ENCODE measurements at regions of chr12 and their contacts with region 1.

Region 1: DNA sequence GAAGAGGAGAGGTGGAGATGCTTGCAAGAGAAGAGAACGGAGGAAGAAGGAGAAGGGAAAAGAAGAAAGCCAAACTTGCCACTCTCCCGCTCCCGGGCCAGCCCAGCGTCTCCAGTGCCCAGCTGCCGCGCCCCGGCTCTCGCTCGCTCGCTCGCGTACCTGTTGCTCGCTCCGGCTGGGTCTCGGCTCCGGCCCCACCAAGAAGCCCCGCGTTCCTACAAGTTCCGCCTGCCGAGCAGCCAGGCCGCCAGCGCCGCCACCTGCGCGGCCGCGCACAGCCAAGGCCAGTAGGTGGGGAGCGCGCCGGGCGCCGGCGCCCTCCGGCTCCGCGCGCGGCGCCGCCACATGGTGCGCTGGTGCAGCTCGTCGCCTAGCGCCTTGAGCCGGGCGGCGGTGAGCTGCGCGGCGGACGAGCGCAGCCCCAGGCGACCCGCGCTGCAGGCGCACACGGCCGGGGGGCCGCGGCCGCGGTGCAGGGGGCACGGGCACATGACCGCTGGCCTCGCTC is 370 bp downstream of the HRK start:
- DNase-seq: peak; percentile 79
- ATAC-seq: peak; percentile 80
- H3K4me3 ChIP-seq: peak overlapping the region; percentile 42 to 81 (median 58)
- H3K4me3 Mint-ChIP-seq: peak overlapping the region; percentile 93
- H3K27ac ChIP-seq: no peak overlapping the region
- H3K27ac Mint-ChIP-seq: peak overlapping the region; percentile 80
- H3K4me1 ChIP-seq: peaks cover 44 to 46% of the 10 kb centered on the region in 2 donors
- H3K4me1 Mint-ChIP-seq: peaks cover 51% of the 10 kb centered on the region
- H3K27me3 ChIP-seq: peaks cover 0 to 48% (median 19%) of the 10 kb centered on the region in 4 experiments
- H3K27me3 Mint-ChIP-seq: peaks cover 30% of the 10 kb centered on the region
- CTCF ChIP-seq: peak; percentile 9

Region 2: DNA sequence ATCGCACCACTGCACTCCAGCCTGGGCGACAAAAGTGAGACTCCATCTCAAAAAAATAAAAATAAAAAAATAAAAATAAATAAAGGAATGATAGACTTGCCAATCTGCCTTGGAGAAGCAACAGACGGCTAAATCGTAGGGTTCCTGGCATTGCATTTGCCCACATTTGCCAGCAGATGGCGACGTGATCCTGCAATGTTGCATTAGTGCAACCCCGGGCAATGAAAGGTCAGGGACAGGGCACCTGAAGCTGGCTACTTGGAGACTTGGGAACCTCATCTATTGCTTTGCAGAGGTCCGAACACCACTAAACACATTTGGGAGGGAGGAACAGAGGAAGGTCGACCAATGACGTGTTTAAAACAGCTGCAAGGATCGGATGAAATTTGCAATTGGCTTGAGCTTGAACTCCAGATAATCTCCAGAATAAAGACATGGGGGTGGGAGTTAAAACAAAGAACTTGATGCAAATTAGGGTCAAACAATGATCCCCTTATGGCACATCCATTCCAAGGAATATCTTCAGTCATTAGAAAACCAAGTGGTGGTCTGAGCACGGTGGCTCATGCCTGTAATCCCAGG is 177.6 kb before region 1 on chr12:
- CTCF ChIA-PET with region 1: interaction called, 69 read pairs
- POLR2A ChIA-PET with region 1: interaction called, 8 read pairs
- intact Hi-C with region 1: loop called (anchors 1 kb)
- DNase-seq: peak; percentile 74
- ATAC-seq: peak; percentile 81
- H3K4me3 ChIP-seq: no peak overlapping the region
- H3K4me3 Mint-ChIP-seq: no peak overlapping the region
- H3K27ac ChIP-seq: no peak overlapping the region
- H3K27ac Mint-ChIP-seq: no peak overlapping the region
- H3K4me1 ChIP-seq: peaks cover 9 to 11% of the 10 kb centered on the region in 2 donors
- H3K4me1 Mint-ChIP-seq: peaks cover 12% of the 10 kb centered on the region
- H3K27me3 ChIP-seq: peaks cover 0 to 3% (median 0%) of the 10 kb centered on the region in 4 experiments
- H3K27me3 Mint-ChIP-seq: peaks cover 8% of the 10 kb centered on the region
- CTCF ChIP-seq: peak; percentile 98

Region 3: DNA sequence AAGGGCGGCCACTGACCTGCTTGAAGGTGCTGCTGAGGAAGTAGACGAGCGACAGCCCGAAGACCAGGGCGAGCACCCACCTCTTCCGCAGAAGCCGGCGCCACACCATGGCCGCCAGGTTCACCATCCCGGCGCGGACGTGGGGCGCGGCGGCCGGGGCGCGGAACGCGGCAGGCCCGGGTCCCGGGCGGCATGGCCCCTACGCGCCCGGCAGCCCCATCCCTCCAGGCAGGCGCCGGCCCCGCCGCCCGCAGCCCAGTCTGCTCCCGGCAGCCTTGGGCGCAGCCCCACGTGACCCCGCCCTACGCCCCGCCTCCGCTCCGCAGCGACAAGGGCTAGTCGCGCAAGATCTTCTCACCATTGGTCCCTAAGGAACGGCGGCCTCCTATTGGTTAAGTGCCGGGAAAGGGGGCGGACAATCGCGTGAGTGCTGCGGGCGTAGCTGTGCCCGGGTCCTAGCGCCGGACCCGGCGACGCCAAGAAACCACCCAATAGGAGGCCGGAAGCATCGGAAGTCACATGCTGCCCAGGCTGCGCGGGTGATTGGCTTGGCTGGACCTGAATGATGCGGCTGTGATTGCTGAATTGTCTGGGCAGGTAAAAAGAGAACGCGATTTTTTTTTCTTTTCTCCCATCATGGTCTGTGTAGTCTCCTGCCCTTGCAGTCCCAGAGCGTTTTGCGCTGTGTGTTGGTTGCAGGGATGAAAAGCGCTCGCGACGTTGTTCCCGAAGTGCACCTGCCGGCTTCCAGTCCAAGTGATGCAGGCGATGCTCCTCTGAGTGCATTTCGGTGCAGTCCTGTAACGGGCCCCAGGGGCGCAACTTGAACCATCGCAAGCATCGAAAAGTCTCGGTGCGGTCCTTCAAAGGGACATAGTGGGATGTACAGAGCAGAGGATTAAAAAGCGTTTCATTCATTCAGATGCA is 142.8 kb before region 1 on chr12 and contains the starts of genes RNFT2 and SPRING1:
- CTCF ChIA-PET with region 1: interaction called, 4 read pairs
- POLR2A ChIA-PET with region 1: interaction called, 5 read pairs
- intact Hi-C with region 1: loop called (anchors 1 kb)
- DNase-seq: peak; percentile 99
- ATAC-seq: peak; percentile 95
- H3K4me3 ChIP-seq: peak within 1 kb of the TSS; percentile 62 to 92 (median 76)
- H3K4me3 Mint-ChIP-seq: peak within 1 kb of the TSS; percentile 97
- H3K27ac ChIP-seq: peak within 1 kb of the TSS; percentile 1 to 81
- H3K27ac Mint-ChIP-seq: peak within 1 kb of the TSS; percentile 90
- H3K4me1 ChIP-seq: peaks cover 18 to 20% of the 10 kb centered on the region in 2 donors
- H3K4me1 Mint-ChIP-seq: peaks cover 33% of the 10 kb centered on the region
- H3K27me3 ChIP-seq: no peaks in the 10 kb centered on the region
- H3K27me3 Mint-ChIP-seq: no peaks in the 10 kb centered on the region
- CTCF ChIP-seq: peak; percentile 7
- total RNA-seq, gene RNFT2: 18.2 and 23.0 TPM in 2 replicates
- total RNA-seq, gene SPRING1: 43.7 and 45.9 TPM in 2 replicates

Region 4: GRCh38 chr12:116759783-116760621 is 120.9 kb before region 1 on chr12:
- CTCF ChIA-PET with region 1: interaction called, 7 read pairs
- POLR2A ChIA-PET with region 1: no interaction called
- intact Hi-C with region 1: loop called (anchors 5 kb)
- DNase-seq: peak; percentile 36
- ATAC-seq: peak; percentile 47
- H3K4me3 ChIP-seq: peak overlapping the region in 3 of 5 experiments; percentile 15 to 33 (median 20)
- H3K4me3 Mint-ChIP-seq: peak overlapping the region; percentile 66
- H3K27ac ChIP-seq: no peak overlapping the region
- H3K27ac Mint-ChIP-seq: peak overlapping the region; percentile 65
- H3K4me1 ChIP-seq: peaks cover 0 to 2% of the 10 kb centered on the region in 2 donors
- H3K4me1 Mint-ChIP-seq: peaks cover 4% of the 10 kb centered on the region
- H3K27me3 ChIP-seq: no peaks in the 10 kb centered on the region
- H3K27me3 Mint-ChIP-seq: no peaks in the 10 kb centered on the region
- CTCF ChIP-seq: no peak

Region 5: DNA sequence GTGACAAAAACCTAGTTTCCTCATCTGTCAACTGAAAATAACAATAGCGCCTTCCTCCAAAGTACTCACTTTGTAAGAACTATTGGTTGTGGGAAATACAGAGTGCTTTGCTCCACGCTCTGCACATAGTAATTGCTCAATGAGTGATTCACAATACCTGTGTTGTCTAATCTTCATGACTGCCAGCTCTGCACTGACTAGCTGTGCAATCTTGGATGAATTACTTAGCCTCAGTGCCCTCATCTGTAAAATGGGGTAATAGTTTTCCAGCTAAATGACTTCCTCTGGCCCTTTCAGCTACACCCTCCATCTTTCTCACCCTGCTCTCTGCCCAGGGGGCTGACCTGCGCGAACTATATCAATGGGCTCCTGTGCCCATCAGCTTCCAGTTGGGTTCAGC is 99.9 kb before region 1 on chr12:
- CTCF ChIA-PET with region 1: no interaction called
- POLR2A ChIA-PET with region 1: no interaction called
- intact Hi-C with region 1: no loop called
- DNase-seq: no peak
- ATAC-seq: no peak
- H3K4me3 ChIP-seq: no peak overlapping the region
- H3K4me3 Mint-ChIP-seq: no peak overlapping the region
- H3K27ac ChIP-seq: no peak overlapping the region
- H3K27ac Mint-ChIP-seq: no peak overlapping the region
- H3K4me1 ChIP-seq: no peaks in the 10 kb centered on the region
- H3K4me1 Mint-ChIP-seq: no peaks in the 10 kb centered on the region
- H3K27me3 ChIP-seq: no peaks in the 10 kb centered on the region
- H3K27me3 Mint-ChIP-seq: no peaks in the 10 kb centered on the region
- CTCF ChIP-seq: no peak

Region 6: DNA sequence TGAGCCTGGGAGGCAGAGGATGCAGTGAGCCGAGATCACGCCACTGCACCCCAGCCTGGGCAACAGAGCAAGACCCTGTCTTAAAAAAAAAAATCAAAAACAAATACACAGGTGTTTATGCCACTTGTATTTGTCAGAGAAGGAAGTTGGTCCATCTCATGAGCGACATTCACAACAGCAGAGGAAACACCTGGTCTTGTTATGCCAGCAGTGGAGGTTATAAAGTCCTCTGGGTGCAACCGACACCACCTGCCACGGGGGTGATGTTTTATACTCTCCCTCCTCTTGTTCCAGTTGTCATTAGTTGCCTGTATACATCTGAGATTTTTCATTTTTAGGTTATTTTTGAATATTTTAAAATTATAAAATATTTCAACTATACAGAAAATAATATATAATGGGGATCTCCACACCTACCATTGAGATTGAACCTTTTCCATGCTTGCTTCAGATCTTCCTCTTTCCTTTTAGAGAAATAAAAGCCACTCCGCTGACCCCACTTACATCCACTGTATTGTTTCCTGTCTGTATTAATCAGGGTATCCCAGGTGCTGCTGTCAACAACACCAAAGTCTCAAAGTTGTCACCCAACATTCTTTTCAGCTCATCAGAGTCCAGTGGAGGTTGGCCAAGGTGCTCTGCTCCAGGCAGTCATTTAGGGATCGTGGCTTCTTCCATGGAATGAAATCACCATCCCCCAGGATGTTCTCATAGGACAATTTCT is 77.7 kb before region 1 on chr12:
- CTCF ChIA-PET with region 1: interaction called, 6 read pairs
- POLR2A ChIA-PET with region 1: interaction called, 5 read pairs
- intact Hi-C with region 1: loop called (anchors 2 kb)
- DNase-seq: peak; percentile 80
- ATAC-seq: peak; percentile 85
- H3K4me3 ChIP-seq: peak overlapping the region in 1 of 5 experiments; percentile 22
- H3K4me3 Mint-ChIP-seq: peak overlapping the region; percentile 59
- H3K27ac ChIP-seq: peak overlapping the region; percentile 92 to 93
- H3K27ac Mint-ChIP-seq: peak overlapping the region; percentile 95
- H3K4me1 ChIP-seq: peaks cover 33 to 46% of the 10 kb centered on the region in 2 donors
- H3K4me1 Mint-ChIP-seq: peaks cover 51% of the 10 kb centered on the region
- H3K27me3 ChIP-seq: no peaks in the 10 kb centered on the region
- H3K27me3 Mint-ChIP-seq: no peaks in the 10 kb centered on the region
- CTCF ChIP-seq: no peak

Region 7: DNA sequence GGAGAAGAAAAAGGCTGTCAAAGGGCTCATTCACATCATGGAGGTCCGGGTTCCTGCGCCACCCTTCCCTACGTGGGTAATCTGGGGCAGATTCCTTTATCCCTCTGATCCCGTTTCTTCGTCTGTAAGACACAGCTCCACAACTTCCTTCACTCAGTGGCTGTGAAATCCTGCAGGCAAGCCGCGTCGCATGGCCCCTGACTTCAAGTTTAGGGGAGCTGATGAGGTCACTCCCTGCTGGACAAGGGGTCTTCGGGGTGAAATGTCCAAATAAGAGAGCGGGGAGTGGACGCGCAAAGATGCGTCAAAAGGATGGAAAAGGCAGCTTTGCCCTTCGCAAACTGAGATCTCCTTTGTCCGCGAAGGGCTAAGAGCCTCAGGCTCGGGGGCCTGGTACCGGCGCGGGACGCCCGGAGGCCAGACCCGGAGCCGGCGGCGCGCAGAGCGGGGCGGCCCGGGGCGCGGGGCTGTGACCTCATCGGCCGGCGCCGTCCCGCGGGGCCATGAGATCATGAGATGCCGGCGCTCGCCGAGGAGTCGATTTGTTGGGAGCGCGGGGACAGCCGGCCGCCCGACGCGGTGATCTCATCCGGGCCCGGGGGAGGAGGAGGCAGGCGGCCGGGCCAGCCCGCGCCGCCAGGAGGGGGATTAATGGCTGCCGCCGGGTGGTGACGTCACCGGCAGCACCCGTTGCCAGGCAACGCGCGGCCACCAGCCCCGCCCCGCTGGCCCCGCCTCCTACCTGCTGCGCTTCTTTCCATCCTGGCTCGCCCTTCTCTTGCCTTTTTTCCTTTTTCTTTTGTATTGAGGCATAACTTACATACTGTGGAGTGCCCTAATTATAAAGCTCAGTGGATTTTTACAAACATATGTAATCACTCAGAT is 61.7 kb before region 1 on chr12:
- CTCF ChIA-PET with region 1: interaction called, 10 read pairs
- POLR2A ChIA-PET with region 1: interaction called, 6 read pairs
- intact Hi-C with region 1: loop called (anchors 1 kb)
- DNase-seq: peak; percentile 95
- ATAC-seq: peak; percentile 84
- H3K4me3 ChIP-seq: peak overlapping the region; percentile 82 to 96 (median 95)
- H3K4me3 Mint-ChIP-seq: peak overlapping the region; percentile 87
- H3K27ac ChIP-seq: peak overlapping the region; percentile 93 to 94
- H3K27ac Mint-ChIP-seq: peak overlapping the region; percentile 93
- H3K4me1 ChIP-seq: peaks cover 47 to 49% of the 10 kb centered on the region in 2 donors
- H3K4me1 Mint-ChIP-seq: peaks cover 59% of the 10 kb centered on the region
- H3K27me3 ChIP-seq: no peaks in the 10 kb centered on the region
- H3K27me3 Mint-ChIP-seq: no peaks in the 10 kb centered on the region
- CTCF ChIP-seq: no peak

Region 8: GRCh38 chr12:116861320-116861719 is 19.6 kb before region 1 on chr12:
- CTCF ChIA-PET with region 1: interaction called, 13 read pairs
- POLR2A ChIA-PET with region 1: interaction called, 7 read pairs
- intact Hi-C with region 1: loop called (anchors 2 kb)
- DNase-seq: peak; percentile 77
- ATAC-seq: peak; percentile 67
- H3K4me3 ChIP-seq: no peak overlapping the region
- H3K4me3 Mint-ChIP-seq: peak overlapping the region; percentile 78
- H3K27ac ChIP-seq: no peak overlapping the region
- H3K27ac Mint-ChIP-seq: peak overlapping the region; percentile 86
- H3K4me1 ChIP-seq: peaks cover 21 to 53% of the 10 kb centered on the region in 2 donors
- H3K4me1 Mint-ChIP-seq: peaks cover 65% of the 10 kb centered on the region
- H3K27me3 ChIP-seq: no peaks in the 10 kb centered on the region
- H3K27me3 Mint-ChIP-seq: no peaks in the 10 kb centered on the region
- CTCF ChIP-seq: no peak

Region 9: GRCh38 chr12:116898669-116899068 is 17.8 kb after region 1 on chr12:
- CTCF ChIA-PET with region 1: no interaction called
- POLR2A ChIA-PET with region 1: no interaction called
- intact Hi-C with region 1: no loop called
- DNase-seq: no peak
- ATAC-seq: no peak
- H3K4me3 ChIP-seq: no peak overlapping the region
- H3K4me3 Mint-ChIP-seq: no peak overlapping the region
- H3K27ac ChIP-seq: no peak overlapping the region
- H3K27ac Mint-ChIP-seq: no peak overlapping the region
- H3K4me1 ChIP-seq: no peaks in the 10 kb centered on the region
- H3K4me1 Mint-ChIP-seq: no peaks in the 10 kb centered on the region
- H3K27me3 ChIP-seq: peaks cover 0 to 9% (median 4%) of the 10 kb centered on the region in 4 experiments
- H3K27me3 Mint-ChIP-seq: peaks cover 44% of the 10 kb centered on the region
- CTCF ChIP-seq: no peak

Region 10: GRCh38 chr12:117294189-117294603 is 413.3 kb after region 1 on chr12:
- CTCF ChIA-PET with region 1: no interaction called
- POLR2A ChIA-PET with region 1: no interaction called
- intact Hi-C with region 1: no loop called
- DNase-seq: no peak
- ATAC-seq: no peak
- H3K4me3 ChIP-seq: no peak overlapping the region
- H3K4me3 Mint-ChIP-seq: no peak overlapping the region
- H3K27ac ChIP-seq: no peak overlapping the region
- H3K27ac Mint-ChIP-seq: no peak overlapping the region
- H3K4me1 ChIP-seq: no peaks in the 10 kb centered on the region
- H3K4me1 Mint-ChIP-seq: no peaks in the 10 kb centered on the region
- H3K27me3 ChIP-seq: peaks cover 0 to 4% (median 0%) of the 10 kb centered on the region in 4 experiments
- H3K27me3 Mint-ChIP-seq: peaks cover 32% of the 10 kb centered on the region
- CTCF ChIP-seq: no peak

Measured in B cell (primary cell).